ENCODE measurements at regions of chr5 and their contacts with region 1.

Region 1: GRCh38 chr5:41707853-41708603 is 162.2 kb downstream of the OXCT1 start:
- DNase-seq: peak; percentile 17
- ATAC-seq: peak; percentile 65; the same call in 1 of the 2 replicates
- H3K4me3 ChIP-seq: no peak overlapping the region
- H3K27ac ChIP-seq: no peak overlapping the region
- H3K4me1 ChIP-seq: no peaks in the 10 kb centered on the region
- H3K27me3 ChIP-seq: no peaks in the 10 kb centered on the region
- CTCF ChIP-seq: peak; percentile 26; the same call in 1 of the 2 replicates

Region 2: DNA sequence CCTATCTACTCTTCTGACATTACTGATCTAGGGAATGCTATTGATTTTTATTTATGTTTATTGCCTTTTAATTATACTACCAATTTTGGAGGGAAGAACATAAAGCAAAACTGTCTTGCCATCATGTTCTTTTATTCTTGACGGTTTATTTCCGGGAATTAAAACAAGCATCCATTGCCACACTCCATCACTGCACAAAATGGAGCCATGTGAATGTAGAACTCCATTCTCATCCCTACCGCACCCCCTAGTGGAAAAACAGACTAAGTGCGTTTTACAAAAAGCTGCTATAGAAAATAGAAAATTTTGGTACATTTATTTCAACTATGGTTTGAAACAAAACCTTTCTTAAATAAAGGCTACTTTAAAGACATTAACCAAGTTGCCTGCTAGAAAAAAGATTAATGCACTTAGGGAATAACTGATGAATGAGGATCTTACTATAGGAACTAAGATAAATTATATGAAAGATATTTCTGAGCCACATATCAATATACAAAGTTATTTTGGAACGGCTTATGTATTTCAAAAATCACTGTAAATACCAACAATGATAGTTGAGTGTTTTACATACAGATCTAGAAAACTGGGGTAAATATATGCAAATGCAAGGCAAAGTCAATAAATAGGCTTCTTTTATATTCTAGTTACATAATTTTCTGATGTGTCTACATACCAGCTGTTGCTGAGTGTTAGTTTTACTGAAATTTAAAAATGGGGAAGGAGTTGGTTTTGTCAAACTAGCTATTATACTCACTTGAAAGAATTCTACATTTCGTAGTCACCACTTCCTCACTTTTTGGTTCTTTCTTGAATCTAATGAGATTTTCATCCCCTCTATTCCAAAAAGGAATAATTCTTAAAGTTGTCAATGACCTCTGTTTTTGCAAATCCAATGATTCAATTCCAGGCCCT is 135.7 kb after region 1 on chr5:
- CTCF ChIA-PET with region 1: interaction called, 3 read pairs
- POLR2A ChIA-PET with region 1: no interaction called
- in situ Hi-C with region 1: no loop called
- intact Hi-C with region 1: loop called (anchors 2 kb)
- DNase-seq: no peak
- ATAC-seq: peak; percentile 68
- H3K4me3 ChIP-seq: no peak overlapping the region
- H3K27ac ChIP-seq: no peak overlapping the region
- H3K4me1 ChIP-seq: no peaks in the 10 kb centered on the region
- H3K27me3 ChIP-seq: no peaks in the 10 kb centered on the region
- CTCF ChIP-seq: peak; percentile 75; the same call in 1 of the 2 replicates

Measured in Panc1 (cell line).